ENCODE measurements at regions of chr1 and their contacts with region 1.

Region 1: GRCh38 chr1:59296358-59297256 is at the start of gene FGGY:
- DNase-seq: peak; percentile 98
- H3K4me3 ChIP-seq: peak within 1 kb of the TSS; percentile 28 to 62 (median 58)
- H3K27ac ChIP-seq: peak within 1 kb of the TSS; percentile 82
- H3K4me1 ChIP-seq: peaks cover 14% of the 10 kb centered on the region
- H3K27me3 ChIP-seq: no peaks in the 10 kb centered on the region
- CTCF ChIP-seq: no peak
- total RNA-seq, gene FGGY: 10.3 to 14.7 TPM

Region 2: DNA sequence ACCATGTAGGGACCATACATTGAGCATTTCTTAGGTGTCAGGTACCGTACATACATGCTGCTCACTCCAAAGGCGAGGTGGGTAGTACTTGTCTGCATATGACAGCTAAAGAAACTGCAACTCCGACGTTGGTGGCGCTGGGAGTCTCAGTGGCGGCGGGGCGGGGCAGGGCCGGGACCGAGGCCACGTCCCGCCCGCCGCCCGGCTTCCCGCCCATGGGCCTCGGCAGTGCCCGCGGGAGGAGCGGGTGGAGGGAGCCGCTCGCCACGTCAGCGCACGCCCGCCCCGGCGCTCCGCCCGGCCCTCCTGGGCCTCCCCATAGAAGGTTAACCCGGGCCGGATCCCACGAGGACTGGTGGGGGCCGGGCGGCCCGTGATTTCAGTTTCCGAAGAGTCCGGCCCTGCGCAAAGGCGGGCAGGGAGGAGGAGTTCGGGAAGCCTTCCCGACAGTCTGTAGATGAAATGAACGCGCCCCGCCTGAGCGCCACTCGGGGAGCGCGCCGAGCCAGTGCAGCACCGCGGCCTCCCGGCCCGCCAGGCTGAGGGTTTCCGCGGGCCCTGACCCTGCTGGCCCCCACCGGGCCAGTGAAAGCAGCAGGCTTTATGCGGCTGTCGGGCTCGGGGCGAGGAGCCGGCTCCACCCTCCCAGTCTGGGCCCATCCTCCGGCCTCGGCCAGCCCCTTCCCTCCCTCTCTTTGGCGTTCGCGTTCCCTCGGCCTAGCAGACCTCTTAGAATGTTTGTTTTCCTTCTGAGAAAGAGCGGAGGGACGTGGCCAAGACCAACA is 392.9 kb before region 1 on chr1:
- CTCF ChIA-PET with region 1: no interaction called
- dilution Hi-C with region 1: no loop called
- in situ Hi-C with region 1: no loop called
- intact Hi-C with region 1: loop called (anchors 2 kb)
- DNase-seq: peak; percentile 84
- H3K4me3 ChIP-seq: peak overlapping the region; percentile 14 to 52 (median 48)
- H3K27ac ChIP-seq: peak overlapping the region; percentile 72
- H3K4me1 ChIP-seq: peaks cover 32% of the 10 kb centered on the region
- H3K27me3 ChIP-seq: no peaks in the 10 kb centered on the region
- CTCF ChIP-seq: no peak

Region 3: GRCh38 chr1:59178339-59179187 is 118.0 kb before region 1 on chr1:
- CTCF ChIA-PET with region 1: no interaction called
- dilution Hi-C with region 1: no loop called
- in situ Hi-C with region 1: no loop called
- intact Hi-C with region 1: no loop called
- DNase-seq: no peak
- H3K4me3 ChIP-seq: no peak overlapping the region
- H3K27ac ChIP-seq: no peak overlapping the region
- H3K4me1 ChIP-seq: no peaks in the 10 kb centered on the region
- H3K27me3 ChIP-seq: no peaks in the 10 kb centered on the region
- CTCF ChIP-seq: no peak

Region 4: GRCh38 chr1:59266180-59266926 is 30.3 kb before region 1 on chr1:
- CTCF ChIA-PET with region 1: no interaction called
- dilution Hi-C with region 1: no loop called
- in situ Hi-C with region 1: no loop called
- intact Hi-C with region 1: no loop called
- DNase-seq: no peak
- H3K4me3 ChIP-seq: no peak overlapping the region
- H3K27ac ChIP-seq: no peak overlapping the region
- H3K4me1 ChIP-seq: no peaks in the 10 kb centered on the region
- H3K27me3 ChIP-seq: no peaks in the 10 kb centered on the region
- CTCF ChIP-seq: no peak

Region 5: GRCh38 chr1:59506952-59507351 is 210.3 kb after region 1 on chr1:
- CTCF ChIA-PET with region 1: no interaction called
- dilution Hi-C with region 1: no loop called
- in situ Hi-C with region 1: no loop called
- intact Hi-C with region 1: loop called (anchors 10 kb)
- DNase-seq: no peak
- H3K4me3 ChIP-seq: no peak overlapping the region
- H3K27ac ChIP-seq: no peak overlapping the region
- H3K4me1 ChIP-seq: peaks cover 9% of the 10 kb centered on the region
- H3K27me3 ChIP-seq: no peaks in the 10 kb centered on the region
- CTCF ChIP-seq: no peak

Region 6: GRCh38 chr1:59568158-59568935 is 271.7 kb after region 1 on chr1:
- CTCF ChIA-PET with region 1: no interaction called
- dilution Hi-C with region 1: no loop called
- in situ Hi-C with region 1: no loop called
- intact Hi-C with region 1: loop called (anchors 1 kb)
- DNase-seq: peak; percentile 16
- H3K4me3 ChIP-seq: no peak overlapping the region
- H3K27ac ChIP-seq: no peak overlapping the region
- H3K4me1 ChIP-seq: peaks cover 3% of the 10 kb centered on the region
- H3K27me3 ChIP-seq: no peaks in the 10 kb centered on the region
- CTCF ChIP-seq: peak in 1 of 2 donors; percentile 58